IMR-90 (cell line): ENCODE measurements at regions of chr17 and their contacts with region 1.

Region 1: GRCh38 chr17:47640076-47640475 is 9.6 kb upstream of the KPNB1 start:
- DNase-seq: no peak
- ATAC-seq: no peak
- H3K4me3 ChIP-seq: no peak overlapping the region
- H3K27ac ChIP-seq: no peak overlapping the region
- H3K4me1 ChIP-seq: no peaks in the 10 kb centered on the region
- H3K27me3 ChIP-seq: no peaks in the 10 kb centered on the region
- CTCF ChIP-seq: no peak
- POLR2A ChIP-seq: no peak
- RAD21 ChIP-seq: no peak

Region 2: DNA sequence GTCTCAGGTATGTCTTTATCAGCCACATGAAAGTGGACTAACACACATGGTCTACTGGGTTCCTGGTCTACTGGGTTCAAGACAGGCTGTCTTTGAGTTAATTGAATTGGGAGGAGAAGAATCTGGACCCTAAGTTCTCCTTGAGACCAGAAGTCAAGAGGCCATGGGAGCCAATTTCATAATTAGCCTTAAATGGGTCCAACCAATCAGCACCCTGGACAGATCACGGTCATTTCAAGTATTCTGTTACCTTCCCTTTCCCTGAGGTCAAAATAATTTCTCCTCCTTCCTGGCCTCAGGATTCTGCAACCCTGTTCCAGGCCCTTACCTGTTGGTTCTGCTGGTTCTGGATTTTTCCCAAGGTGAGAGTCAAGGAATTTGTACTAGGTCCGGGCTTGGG is 157.7 kb after region 1 on chr17:
- CTCF ChIA-PET with region 1: no interaction called
- POLR2A ChIA-PET with region 1: interaction called, 17 read pairs
- dilution Hi-C with region 1: no loop called
- in situ Hi-C with region 1: no loop called
- intact Hi-C with region 1: no loop called
- DNase-seq: no peak
- ATAC-seq: no peak
- H3K4me3 ChIP-seq: no peak overlapping the region
- H3K27ac ChIP-seq: no peak overlapping the region
- H3K4me1 ChIP-seq: no peaks in the 10 kb centered on the region
- H3K27me3 ChIP-seq: peaks cover 41% of the 10 kb centered on the region
- CTCF ChIP-seq: no peak
- POLR2A ChIP-seq: no peak
- RAD21 ChIP-seq: no peak